ENCODE measurements at regions of chr2 and their contacts with region 1.

Region 1: DNA sequence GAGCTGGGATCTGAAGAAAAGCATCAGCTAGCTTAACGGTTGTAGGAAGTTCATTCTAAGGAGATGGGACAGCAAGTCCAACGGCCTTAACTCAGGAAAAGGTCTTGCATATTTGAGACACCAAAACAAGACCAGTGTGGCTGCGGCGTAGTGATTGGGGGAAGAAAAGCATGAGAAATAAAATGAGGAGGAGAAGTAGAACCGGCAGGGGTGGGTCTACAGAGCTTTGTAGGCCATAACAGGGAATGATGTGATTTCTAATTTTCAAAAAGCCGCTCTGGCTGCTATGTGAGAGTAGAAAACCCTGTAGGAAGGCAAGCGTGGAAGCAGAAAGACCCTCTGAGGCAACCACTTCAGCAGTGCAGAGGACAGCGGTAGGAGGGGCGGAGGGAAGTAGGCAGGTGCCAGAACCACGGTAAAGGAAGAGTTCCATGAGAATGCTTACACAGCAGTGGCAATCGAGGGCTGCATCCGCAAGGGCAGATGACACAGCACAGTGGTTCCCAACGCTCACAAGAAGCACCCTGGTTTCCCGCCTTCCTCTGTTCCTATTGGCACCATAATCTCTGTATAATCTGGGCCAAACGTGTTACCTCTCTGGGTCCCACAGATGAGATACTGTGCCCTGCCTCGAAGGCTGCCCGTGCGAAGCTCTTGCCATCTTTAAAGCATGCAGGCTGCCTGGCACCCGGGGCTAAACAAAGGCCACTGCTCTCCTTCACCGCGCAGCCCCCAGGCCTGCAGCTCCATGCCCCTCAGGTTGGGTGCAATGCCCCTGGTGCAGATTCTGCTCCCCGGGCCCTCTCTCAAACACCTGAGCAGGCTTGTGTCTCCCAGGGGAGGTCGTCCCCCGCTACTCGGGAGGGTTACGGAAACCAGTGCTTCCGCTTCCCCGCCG is 791 bp downstream of the ANKRD39 start:
- DNase-seq: no peak
- H3K4me3 ChIP-seq: peak overlapping the region; percentile 59 to 76 (median 73)
- H3K4me3 Mint-ChIP-seq: peak overlapping the region; percentile 80 to 89
- H3K27ac ChIP-seq: peak overlapping the region in 1 of 2 donors; percentile 57
- H3K27ac Mint-ChIP-seq: peak overlapping the region in 3 of 7 donors; percentile 33 to 79 (median 56)
- H3K4me1 ChIP-seq: peaks cover 26 to 30% of the 10 kb centered on the region in 2 donors
- H3K4me1 Mint-ChIP-seq: peaks cover 34% of the 10 kb centered on the region
- H3K27me3 ChIP-seq: peaks cover 0 to 30% of the 10 kb centered on the region in 2 donors
- H3K27me3 Mint-ChIP-seq: peaks cover 20 to 33% (median 31%) of the 10 kb centered on the region in 3 donors
- CTCF ChIP-seq: no peak

Region 2: GRCh38 chr2:96656540-96656939 is 200.5 kb before region 1 on chr2:
- intact Hi-C with region 1: no loop called
- DNase-seq: peak; percentile 47 to 59 (median 50)
- H3K4me3 ChIP-seq: peak overlapping the region in 1 of 3 experiments; percentile 38
- H3K4me3 Mint-ChIP-seq: no peak overlapping the region
- H3K27ac ChIP-seq: peak overlapping the region; percentile 67 to 81
- H3K27ac Mint-ChIP-seq: peak overlapping the region; percentile 87 to 95 (median 93)
- H3K4me1 ChIP-seq: peaks cover 34 to 36% of the 10 kb centered on the region in 2 donors
- H3K4me1 Mint-ChIP-seq: peaks cover 33% of the 10 kb centered on the region
- H3K27me3 ChIP-seq: no peaks in the 10 kb centered on the region
- H3K27me3 Mint-ChIP-seq: no peaks in the 10 kb centered on the region
- CTCF ChIP-seq: no peak

Region 3: DNA sequence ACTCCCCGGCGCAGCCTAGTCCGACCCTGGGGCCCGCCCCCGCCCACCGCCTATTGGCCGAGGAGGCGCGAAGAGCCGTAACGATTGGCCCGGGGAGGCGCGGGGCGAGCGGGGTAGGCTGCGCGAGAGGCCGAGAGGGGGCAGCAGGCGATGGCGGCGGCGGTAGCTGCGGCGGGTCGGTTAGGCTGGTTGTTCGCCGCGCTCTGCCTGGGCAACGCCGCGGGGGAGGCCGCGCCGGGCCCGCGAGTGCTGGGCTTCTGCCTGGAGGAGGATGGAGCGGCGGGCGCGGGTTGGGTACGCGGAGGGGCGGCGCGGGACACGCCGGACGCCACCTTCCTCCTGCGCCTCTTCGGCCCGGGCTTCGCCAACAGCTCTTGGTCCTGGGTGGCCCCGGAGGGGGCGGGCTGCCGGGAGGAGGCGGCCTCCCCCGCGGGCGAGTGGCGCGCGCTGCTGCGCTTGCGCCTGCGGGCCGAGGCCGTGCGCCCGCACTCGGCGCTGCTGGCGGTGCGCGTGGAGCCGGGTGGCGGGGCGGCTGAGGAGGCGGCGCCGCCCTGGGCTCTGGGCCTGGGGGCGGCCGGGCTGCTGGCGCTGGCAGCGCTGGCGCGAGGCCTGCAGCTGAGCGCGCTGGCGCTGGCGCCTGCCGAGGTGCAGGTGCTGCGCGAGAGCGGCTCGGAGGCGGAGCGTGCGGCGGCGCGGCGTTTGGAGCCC is 40.7 kb before region 1 on chr2 and contains the start of gene CNNM3:
- intact Hi-C with region 1: loop called (anchors 5 kb)
- DNase-seq: peak; percentile 86 to 88 (median 87)
- H3K4me3 ChIP-seq: peak within 1 kb of the TSS; percentile 51 to 93 (median 83)
- H3K4me3 Mint-ChIP-seq: peak within 1 kb of the TSS; percentile 86 to 93
- H3K27ac ChIP-seq: peak within 1 kb of the TSS in 1 of 2 donors; percentile 69
- H3K27ac Mint-ChIP-seq: peak within 1 kb of the TSS in 6 of 7 donors; percentile 33 to 70 (median 68)
- H3K4me1 ChIP-seq: peaks cover 22 to 35% of the 10 kb centered on the region in 2 donors
- H3K4me1 Mint-ChIP-seq: peaks cover 53% of the 10 kb centered on the region
- H3K27me3 ChIP-seq: no peaks in the 10 kb centered on the region
- H3K27me3 Mint-ChIP-seq: peaks cover 10 to 12% (median 10%) of the 10 kb centered on the region in 3 donors
- CTCF ChIP-seq: peak; percentile 79
- polyA plus RNA-seq, gene CNNM3: 1.2 to 12.0 (median 4.9) TPM

Region 4: DNA sequence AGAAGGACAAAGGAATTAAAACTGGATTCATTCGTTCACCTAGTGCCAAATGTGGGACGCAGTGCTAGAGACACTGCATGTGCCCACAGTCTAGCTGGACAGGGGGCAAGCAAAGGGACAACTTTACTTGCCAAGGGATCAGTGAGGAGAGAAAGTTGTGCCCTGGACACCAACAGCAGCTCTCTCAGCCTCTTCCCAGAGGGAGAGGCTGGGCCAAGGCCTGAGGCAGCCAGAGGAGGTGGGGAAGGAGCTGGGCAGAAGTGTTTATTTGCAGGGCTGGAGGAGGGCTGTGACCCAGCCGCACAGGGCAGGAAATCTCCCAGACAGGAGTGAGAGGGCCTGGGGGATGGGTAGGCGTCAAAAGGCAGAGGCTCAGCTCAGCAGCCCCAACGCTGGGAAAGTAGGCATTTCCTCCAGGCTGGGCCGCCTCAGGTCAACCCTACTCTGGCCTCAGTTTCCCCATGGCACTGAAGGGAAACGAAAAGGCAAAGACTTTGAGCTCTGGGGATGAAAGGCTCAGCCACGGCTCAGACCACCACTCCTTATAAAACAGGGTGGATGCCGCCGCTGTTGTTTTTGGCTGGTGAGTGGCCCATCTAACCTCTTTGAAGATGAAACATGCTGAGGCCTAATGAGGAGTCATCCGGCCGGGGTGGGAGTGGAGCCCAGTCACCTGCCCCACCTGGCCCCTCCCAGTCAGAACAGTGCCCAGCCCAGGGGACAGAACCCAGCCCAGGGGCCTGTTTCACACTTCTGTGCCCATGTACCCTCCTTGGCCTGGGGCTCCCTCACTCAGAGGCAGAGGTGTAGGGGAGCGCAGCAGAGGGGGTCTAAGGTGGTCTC is 34.7 kb after region 1 on chr2:
- intact Hi-C with region 1: no loop called
- DNase-seq: no peak
- H3K4me3 ChIP-seq: no peak overlapping the region
- H3K4me3 Mint-ChIP-seq: peak overlapping the region in 1 of 2 donors; percentile 67
- H3K27ac ChIP-seq: no peak overlapping the region
- H3K27ac Mint-ChIP-seq: no peak overlapping the region
- H3K4me1 ChIP-seq: peaks cover 21 to 25% of the 10 kb centered on the region in 2 donors
- H3K4me1 Mint-ChIP-seq: peaks cover 18% of the 10 kb centered on the region
- H3K27me3 ChIP-seq: peaks cover 0 to 66% of the 10 kb centered on the region in 2 donors
- H3K27me3 Mint-ChIP-seq: peaks cover 39 to 86% (median 50%) of the 10 kb centered on the region in 3 donors
- CTCF ChIP-seq: no peak

Region 5: GRCh38 chr2:96960153-96960961 is 103.3 kb after region 1 on chr2:
- intact Hi-C with region 1: loop called (anchors 1 kb)
- DNase-seq: peak; percentile 59 to 74 (median 60)
- H3K4me3 ChIP-seq: no peak overlapping the region
- H3K4me3 Mint-ChIP-seq: no peak overlapping the region
- H3K27ac ChIP-seq: no peak overlapping the region
- H3K27ac Mint-ChIP-seq: no peak overlapping the region
- H3K4me1 ChIP-seq: no peaks in the 10 kb centered on the region
- H3K4me1 Mint-ChIP-seq: peaks cover 8% of the 10 kb centered on the region
- H3K27me3 ChIP-seq: peaks cover 0 to 3% of the 10 kb centered on the region in 2 donors
- H3K27me3 Mint-ChIP-seq: peaks cover 5 to 9% (median 9%) of the 10 kb centered on the region in 3 donors
- CTCF ChIP-seq: peak; percentile 82